Activated naive CD8-positive, alpha-beta T cell treated with anti-CD3 and anti-CD28 coated beads, Interleukin-2, amount 10 ng/mL, durations not matched to agents 7 days and 5 days (primary cell): ENCODE measurements at regions of chr12 and their contacts with region 1.

Region 1: GRCh38 chr12:4107436-4107878 is 166.1 kb upstream of the CCND2 start:
- DNase-seq: no peak
- ATAC-seq: peak; percentile 86
- H3K4me3 Mint-ChIP-seq: peak overlapping the region; percentile 76
- H3K27ac Mint-ChIP-seq: peak overlapping the region; percentile 93
- H3K4me1 Mint-ChIP-seq: peaks cover 48% of the 10 kb centered on the region
- H3K27me3 Mint-ChIP-seq: no peaks in the 10 kb centered on the region

Region 2: DNA sequence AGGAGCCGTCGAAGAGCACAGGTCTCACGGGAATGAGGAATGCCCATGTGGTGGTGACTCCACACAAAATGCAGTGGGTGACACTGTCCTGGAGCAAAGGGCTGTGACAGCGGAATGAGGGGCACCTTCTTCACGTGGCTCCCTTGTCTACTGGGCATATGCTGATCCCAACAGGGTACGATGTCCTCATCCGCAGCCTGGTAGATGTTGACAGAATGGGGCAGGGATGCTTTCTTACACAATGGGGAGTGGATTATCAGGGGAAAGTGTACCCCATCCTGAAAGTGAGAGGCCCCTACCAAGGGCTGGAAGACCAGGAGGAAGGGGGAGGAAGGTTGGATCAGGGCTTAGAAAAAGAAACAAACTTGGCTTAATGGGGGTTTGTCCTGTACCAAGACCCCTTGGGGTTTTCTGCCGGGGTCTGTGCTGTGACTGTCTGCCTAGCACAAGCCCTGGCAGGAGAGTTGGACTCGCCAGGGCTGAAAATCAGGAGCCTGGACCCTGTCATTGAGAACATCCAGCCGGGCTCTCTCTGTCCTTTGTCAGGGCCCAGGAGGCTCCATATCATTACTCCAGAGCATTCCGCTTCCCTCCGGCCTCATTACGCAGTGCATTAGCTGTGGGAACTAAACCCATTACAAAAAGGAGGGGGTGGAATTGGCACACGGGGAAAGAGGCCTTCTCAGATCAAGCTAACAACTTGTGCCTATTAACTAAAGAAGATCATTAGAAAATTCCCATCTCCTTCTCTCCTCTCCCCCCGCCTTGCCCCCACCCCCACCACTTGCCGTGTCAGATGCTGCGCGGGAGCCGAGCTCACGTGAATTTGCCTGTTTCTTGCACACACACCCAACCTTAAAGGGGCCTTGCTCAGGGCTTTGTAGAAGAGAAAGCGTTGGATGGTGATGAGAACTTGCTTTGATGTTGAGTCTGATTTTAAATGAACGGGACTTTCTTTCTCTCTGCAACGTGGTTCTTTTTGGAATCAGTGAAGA is 62.4 kb before region 1 on chr12:
- POLR2A ChIA-PET with region 1: no interaction called
- DNase-seq: no peak
- ATAC-seq: no peak
- H3K4me3 Mint-ChIP-seq: no peak overlapping the region
- H3K27ac Mint-ChIP-seq: no peak overlapping the region
- H3K4me1 Mint-ChIP-seq: peaks cover under 1% of the 10 kb centered on the region
- H3K27me3 Mint-ChIP-seq: peaks cover 8% of the 10 kb centered on the region

Region 3: DNA sequence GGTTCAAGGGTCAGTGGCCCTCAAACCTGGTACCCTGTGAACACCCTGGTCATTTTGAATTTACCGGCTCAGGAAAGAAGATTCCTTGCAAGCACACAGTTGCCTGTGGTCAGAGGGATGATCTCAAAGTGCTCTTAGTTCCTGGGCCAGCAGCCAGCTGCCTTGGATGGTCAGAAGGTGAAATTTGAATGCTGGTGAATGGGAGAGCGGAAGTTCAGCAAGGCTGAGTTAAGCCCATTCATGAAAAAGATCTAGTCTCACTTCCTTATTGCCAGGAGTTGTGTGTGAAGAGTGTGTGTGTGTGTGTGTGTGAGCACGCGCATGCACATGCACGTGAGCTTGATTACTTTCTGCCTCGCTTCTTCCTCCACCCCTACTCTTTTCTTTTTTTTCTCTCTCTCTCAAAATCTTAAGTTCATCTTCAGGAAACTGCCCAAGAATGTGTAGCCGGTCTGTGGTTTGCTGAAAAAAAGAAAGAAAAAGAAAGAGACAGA is 10.6 kb after region 1 on chr12:
- POLR2A ChIA-PET with region 1: interaction called, 31 read pairs
- DNase-seq: no peak
- ATAC-seq: peak; percentile 47
- H3K4me3 Mint-ChIP-seq: peak overlapping the region; percentile 69
- H3K27ac Mint-ChIP-seq: peak overlapping the region; percentile 91
- H3K4me1 Mint-ChIP-seq: peaks cover 66% of the 10 kb centered on the region
- H3K27me3 Mint-ChIP-seq: no peaks in the 10 kb centered on the region

Region 4: GRCh38 chr12:4140581-4141301 is 33.3 kb after region 1 on chr12:
- POLR2A ChIA-PET with region 1: interaction called, 30 read pairs
- DNase-seq: no peak
- ATAC-seq: no peak
- H3K4me3 Mint-ChIP-seq: no peak overlapping the region
- H3K27ac Mint-ChIP-seq: peak overlapping the region; percentile 81
- H3K4me1 Mint-ChIP-seq: peaks cover 72% of the 10 kb centered on the region
- H3K27me3 Mint-ChIP-seq: no peaks in the 10 kb centered on the region

Region 5: GRCh38 chr12:4148418-4149056 is 41.1 kb after region 1 on chr12:
- POLR2A ChIA-PET with region 1: interaction called, 30 read pairs
- DNase-seq: no peak
- ATAC-seq: peak; percentile 8
- H3K4me3 Mint-ChIP-seq: peak overlapping the region; percentile 35
- H3K27ac Mint-ChIP-seq: peak overlapping the region; percentile 89
- H3K4me1 Mint-ChIP-seq: peaks cover 81% of the 10 kb centered on the region
- H3K27me3 Mint-ChIP-seq: no peaks in the 10 kb centered on the region

Region 6: DNA sequence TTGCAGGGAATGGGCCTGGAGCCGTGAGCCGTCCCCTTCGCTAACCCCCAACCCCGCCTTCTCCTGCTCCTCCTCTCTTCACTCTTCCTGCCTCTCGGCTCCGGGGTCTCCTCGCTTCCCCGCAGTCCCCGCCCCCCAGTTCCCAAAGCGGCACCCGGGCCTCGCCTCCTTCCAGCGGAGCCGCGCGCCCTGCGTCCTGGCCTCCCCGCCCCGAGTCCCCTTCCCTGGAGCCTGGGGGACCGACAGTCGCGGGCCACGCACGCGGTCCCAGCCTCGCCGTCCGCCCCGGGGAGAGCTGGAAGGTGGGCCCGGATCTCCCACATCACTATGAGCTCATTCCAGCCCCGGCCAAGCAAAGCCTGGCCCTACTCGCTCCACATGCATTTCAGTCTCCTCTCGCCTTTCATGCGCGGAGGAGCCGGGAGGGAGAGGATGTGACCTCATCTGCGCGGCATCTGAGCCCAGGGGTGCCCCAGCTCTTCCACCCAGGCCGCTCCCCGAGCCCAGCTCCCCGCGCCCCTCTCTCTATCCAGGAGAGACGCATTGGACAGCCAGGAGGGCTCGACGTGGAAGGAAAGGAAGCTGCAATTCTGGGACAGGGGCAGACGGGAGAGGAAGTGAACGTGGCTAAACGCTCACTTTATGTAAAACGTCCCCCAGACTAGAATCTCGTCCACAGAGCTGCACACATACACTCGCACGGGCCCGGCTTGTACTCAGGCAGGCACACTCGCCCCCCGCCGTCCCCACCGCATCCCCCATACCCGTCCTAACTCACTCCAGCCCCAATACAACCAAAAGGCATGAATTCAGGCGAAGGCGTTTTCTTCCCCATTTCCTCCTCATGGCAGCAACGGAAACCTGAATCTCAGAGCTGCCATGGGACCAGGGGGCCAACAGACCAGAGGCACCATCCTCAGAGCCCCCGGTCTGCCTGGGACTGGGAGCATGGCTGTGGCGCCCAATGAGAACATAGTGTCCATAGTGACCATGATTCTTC is 57.4 kb after region 1 on chr12:
- POLR2A ChIA-PET with region 1: interaction called, 10 read pairs
- DNase-seq: peak; percentile 79
- ATAC-seq: peak; percentile 98
- H3K4me3 Mint-ChIP-seq: peak overlapping the region; percentile 82
- H3K27ac Mint-ChIP-seq: peak overlapping the region; percentile 90
- H3K4me1 Mint-ChIP-seq: peaks cover 35% of the 10 kb centered on the region
- H3K27me3 Mint-ChIP-seq: no peaks in the 10 kb centered on the region

Region 7: DNA sequence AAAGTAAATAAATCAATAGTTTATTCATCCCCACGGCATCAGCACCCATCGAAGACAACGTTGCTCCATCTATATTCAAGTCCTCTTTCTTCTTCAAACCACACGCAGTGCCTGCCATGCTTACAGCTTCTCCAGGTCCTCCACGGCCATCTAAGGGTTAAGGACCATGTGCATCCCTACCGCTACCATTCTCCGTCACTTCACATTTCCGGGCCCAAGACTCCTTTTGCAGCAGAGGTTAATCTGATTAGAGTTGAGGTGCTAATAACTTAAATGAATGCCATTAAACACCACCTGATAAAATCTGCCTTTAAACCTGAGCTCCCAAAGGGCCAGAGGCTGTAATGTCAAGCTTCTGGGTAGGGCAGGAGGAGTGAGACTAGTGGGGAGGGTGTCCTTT is 86.4 kb after region 1 on chr12:
- POLR2A ChIA-PET with region 1: no interaction called
- DNase-seq: no peak
- ATAC-seq: no peak
- H3K4me3 Mint-ChIP-seq: no peak overlapping the region
- H3K27ac Mint-ChIP-seq: no peak overlapping the region
- H3K4me1 Mint-ChIP-seq: peaks cover 1% of the 10 kb centered on the region
- H3K27me3 Mint-ChIP-seq: no peaks in the 10 kb centered on the region

Region 8: GRCh38 chr12:4269279-4269991 is 162.0 kb after region 1 on chr12:
- POLR2A ChIA-PET with region 1: interaction called, 160 read pairs
- DNase-seq: peak; percentile 95
- ATAC-seq: peak; percentile 5
- H3K4me3 Mint-ChIP-seq: peak overlapping the region; percentile 90
- H3K27ac Mint-ChIP-seq: peak overlapping the region; percentile 95
- H3K4me1 Mint-ChIP-seq: peaks cover 19% of the 10 kb centered on the region
- H3K27me3 Mint-ChIP-seq: peaks cover 7% of the 10 kb centered on the region